BJ (cell line): ENCODE measurements at regions of chr6 and their contacts with region 1.

Region 1: DNA sequence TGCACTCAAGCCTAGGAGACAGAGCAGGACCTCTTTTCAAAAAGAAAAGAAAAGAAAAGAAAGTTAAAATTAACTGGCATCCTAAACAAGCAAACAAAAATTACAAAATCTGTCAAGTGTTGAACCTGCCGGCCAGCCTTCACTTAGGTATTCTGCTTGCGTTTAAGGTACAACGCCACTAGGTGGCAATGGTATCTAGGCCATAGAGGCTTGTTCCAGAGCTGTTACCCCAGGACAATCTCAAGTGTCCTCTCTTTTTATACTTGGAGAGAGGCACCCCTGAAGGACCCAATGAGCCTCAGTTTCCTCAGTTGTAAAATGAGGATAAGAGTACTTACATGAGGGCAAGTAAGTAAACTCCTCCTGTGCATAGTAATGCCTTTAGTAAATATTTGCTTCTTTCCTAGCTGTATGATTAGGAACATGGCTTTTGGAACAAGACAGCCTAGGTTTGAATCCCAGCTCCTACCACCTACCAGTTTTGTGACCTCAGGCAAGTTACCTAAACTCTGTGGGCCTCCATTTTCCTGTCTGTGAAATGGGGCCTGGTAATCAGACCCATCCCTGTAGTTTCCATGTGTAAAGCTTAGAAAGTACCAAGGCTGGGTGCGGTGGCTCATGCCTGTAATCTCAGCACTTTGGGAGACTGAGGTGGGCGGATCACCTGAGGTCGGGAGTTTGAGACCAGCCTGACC is 5.8 kb upstream of the PACSIN1 start:
- DNase-seq: no peak
- H3K4me3 ChIP-seq: no peak overlapping the region
- H3K27me3 ChIP-seq: no peaks in the 10 kb centered on the region
- CTCF ChIP-seq: peak; percentile 66

Region 2: DNA sequence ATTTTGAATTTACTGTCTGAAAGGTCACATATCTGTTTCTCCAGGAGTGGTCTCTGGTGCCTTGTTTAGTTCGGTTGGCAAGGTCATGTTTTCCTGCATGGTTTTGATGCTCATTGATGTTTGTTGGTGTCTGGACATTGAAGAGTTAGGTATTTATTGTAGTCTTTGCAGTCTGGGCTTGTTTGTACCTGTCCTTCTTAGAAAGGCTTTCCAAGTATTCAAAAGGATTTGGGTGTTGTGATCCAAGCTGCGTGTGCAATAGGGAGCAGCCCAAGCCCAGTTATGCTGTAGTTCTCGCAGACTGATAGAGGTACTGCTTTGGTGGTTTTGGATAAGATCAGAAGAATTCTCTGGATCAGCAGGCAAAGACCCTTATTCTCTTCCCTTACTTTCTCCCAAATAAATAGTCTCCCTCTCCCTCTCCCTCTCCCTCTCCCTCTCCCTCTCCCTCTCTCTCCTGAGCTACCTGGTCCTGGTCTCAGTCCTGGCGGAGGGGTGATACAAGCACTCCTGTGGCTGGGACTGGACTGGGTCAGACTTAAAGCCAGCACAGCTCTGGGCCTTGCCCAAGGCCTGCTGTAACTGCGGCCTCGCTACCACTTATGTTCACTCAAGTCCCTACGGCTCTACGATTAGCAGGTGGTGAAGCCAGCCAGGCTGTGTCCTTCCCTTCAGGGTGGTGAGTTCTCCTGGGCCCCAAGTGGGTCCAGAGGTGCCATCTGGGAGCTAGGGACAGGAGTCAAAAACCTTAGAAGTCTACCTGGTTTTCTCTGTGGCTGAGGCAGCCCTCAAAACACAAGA is 286.9 kb before region 1 on chr6:
- CTCF ChIA-PET with region 1: no interaction called
- POLR2A ChIA-PET with region 1: interaction called, 13 read pairs
- DNase-seq: no peak
- H3K4me3 ChIP-seq: no peak overlapping the region
- H3K27me3 ChIP-seq: peaks cover 1% of the 10 kb centered on the region; the same call in 1 of the 2 replicates
- CTCF ChIP-seq: no peak

Region 3: GRCh38 chr6:34447910-34448309 is 12.1 kb before region 1 on chr6:
- CTCF ChIA-PET with region 1: interaction called, 20 read pairs
- POLR2A ChIA-PET with region 1: no interaction called
- DNase-seq: no peak
- H3K4me3 ChIP-seq: no peak overlapping the region
- H3K27me3 ChIP-seq: peaks cover 2% of the 10 kb centered on the region
- CTCF ChIP-seq: no peak

Region 4: DNA sequence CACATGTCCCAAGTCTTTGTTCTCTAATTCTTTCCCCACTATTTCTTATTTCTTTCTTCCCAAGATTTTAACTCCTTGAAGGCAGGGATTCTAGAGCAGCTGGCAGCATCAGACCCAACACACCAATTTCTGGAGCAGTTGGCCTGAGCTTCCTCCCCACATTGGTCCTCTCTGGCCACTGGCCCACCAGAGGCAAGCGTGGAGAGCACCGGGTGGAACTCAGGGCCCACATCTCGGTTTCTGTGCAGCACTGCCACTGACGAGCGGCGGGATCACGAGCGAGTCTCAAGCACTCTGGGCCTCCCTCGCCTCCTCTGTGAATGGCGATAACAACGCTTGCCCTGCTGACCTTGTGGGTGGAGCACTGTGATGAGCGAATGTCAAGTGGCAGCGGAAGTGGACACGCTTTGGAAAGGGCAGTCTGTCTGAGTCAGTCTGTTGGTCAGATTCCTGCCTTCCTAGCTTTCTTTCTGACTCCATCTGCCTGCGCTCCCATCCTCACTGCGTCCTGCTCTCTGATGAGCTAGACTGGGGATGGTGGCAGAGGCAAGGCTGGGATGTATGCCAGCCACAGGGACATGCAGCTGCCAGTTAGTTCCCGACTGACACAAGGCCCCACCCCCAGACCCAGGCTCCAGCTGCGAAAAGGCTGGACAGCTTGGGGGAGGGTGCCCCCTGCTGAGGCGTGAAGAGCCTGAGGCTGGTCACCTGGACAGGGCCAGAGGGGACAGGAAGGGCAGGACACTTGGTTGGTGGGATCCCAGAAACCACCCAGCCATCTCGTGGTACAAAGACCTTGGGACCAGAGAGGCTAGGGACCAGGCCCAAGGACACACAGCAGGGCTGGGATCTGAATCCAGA is 100.5 kb after region 1 on chr6:
- CTCF ChIA-PET with region 1: no interaction called
- POLR2A ChIA-PET with region 1: no interaction called
- DNase-seq: no peak
- H3K4me3 ChIP-seq: no peak overlapping the region
- H3K27me3 ChIP-seq: peaks cover 1% of the 10 kb centered on the region; the same call in 1 of the 2 replicates
- CTCF ChIP-seq: no peak